Activated CD4-positive, alpha-beta T cell treated with anti-CD3 and anti-CD28 coated beads for 36 hours (primary cell): ENCODE measurements at regions of chrX and their contacts with region 1.

Region 1: GRCh38 chrX:38664285-38664684 is 102.9 kb downstream of the TSPAN7 start:
- DNase-seq: peak; percentile 22
- ATAC-seq: no peak
- H3K4me3 Mint-ChIP-seq: no peak overlapping the region
- H3K27ac Mint-ChIP-seq: no peak overlapping the region
- H3K4me1 Mint-ChIP-seq: no peaks in the 10 kb centered on the region
- H3K27me3 Mint-ChIP-seq: peaks cover 2% of the 10 kb centered on the region

Region 2: GRCh38 chrX:38561126-38561868 is 103.0 kb before region 1 on chrX and contains the start of gene TSPAN7:
- CTCF ChIA-PET with region 1: no interaction called
- POLR2A ChIA-PET with region 1: no interaction called
- intact Hi-C with region 1: no loop called
- DNase-seq: peak; percentile 89
- ATAC-seq: peak; percentile 96
- H3K4me3 Mint-ChIP-seq: peak within 1 kb of the TSS; percentile 76
- H3K27ac Mint-ChIP-seq: no peak within 1 kb of the TSS
- H3K4me1 Mint-ChIP-seq: no peaks in the 10 kb centered on the region
- H3K27me3 Mint-ChIP-seq: no peaks in the 10 kb centered on the region
- total RNA-seq, gene TSPAN7: 0.42 to 0.85 TPM

Region 3: GRCh38 chrX:38985375-38985774 is 321.1 kb after region 1 on chrX:
- CTCF ChIA-PET with region 1: no interaction called
- POLR2A ChIA-PET with region 1: no interaction called
- intact Hi-C with region 1: loop called (anchors 2 to 10 kb)
- DNase-seq: peak; percentile 7
- ATAC-seq: peak; percentile 65
- H3K4me3 Mint-ChIP-seq: no peak overlapping the region
- H3K27ac Mint-ChIP-seq: no peak overlapping the region
- H3K4me1 Mint-ChIP-seq: no peaks in the 10 kb centered on the region
- H3K27me3 Mint-ChIP-seq: no peaks in the 10 kb centered on the region

Region 4: GRCh38 chrX:39149761-39150160 is 485.5 kb after region 1 on chrX:
- CTCF ChIA-PET with region 1: interaction called, 7 read pairs
- POLR2A ChIA-PET with region 1: no interaction called
- intact Hi-C with region 1: loop called in 1 of 2 experiments (anchors 2 kb)
- DNase-seq: peak; percentile 81
- ATAC-seq: no peak
- H3K4me3 Mint-ChIP-seq: no peak overlapping the region
- H3K27ac Mint-ChIP-seq: no peak overlapping the region
- H3K4me1 Mint-ChIP-seq: no peaks in the 10 kb centered on the region
- H3K27me3 Mint-ChIP-seq: no peaks in the 10 kb centered on the region